Dendritic cell treated with granulocyte-macrophage colony-stimulating factor and Interleukin-4, amounts not matched to agents 40 ng/mL and 50 ng/mL, for 4 days (primary cell): ENCODE measurements at regions of chr7 and their contacts with region 1.

Region 1: DNA sequence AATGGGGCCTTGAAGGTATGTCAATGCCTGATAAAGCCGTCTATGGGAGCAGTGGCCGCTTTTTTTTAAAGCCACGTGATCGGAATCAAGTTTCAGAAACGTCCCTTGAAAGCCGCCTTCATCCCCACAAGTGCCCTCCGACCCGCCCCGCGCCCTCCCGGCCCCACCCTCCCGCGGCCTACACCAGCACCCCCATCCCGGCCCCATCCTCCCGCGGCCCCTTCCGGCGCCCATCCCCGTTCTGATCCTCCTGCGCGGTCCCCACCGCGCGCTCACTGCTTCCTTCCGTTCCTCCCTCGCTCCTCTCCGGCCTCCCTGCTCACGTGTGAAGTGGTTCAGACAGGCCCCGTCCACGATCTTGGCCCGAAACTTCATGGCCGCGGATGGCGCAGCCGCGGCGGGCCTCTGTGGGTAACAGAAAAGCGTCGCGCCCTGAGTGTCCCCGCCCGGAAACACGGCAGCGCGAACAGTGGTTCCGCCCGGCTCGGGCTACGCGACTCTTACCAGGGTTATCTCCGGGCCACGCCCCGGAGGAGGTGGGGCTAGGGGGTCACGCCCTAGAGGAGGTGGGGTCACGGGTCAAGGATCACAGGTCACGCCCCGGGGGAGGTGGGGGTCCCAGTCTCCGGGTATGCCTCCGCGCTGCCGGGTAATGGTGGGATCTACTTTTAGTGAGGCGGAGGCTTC is at the start of gene HUS1:
- H3K4me3 Mint-ChIP-seq: peak within 1 kb of the TSS; percentile 83
- H3K27ac Mint-ChIP-seq: peak within 1 kb of the TSS; percentile 95
- H3K4me1 Mint-ChIP-seq: peaks cover 19% of the 10 kb centered on the region
- H3K27me3 Mint-ChIP-seq: no peaks in the 10 kb centered on the region

Region 2: DNA sequence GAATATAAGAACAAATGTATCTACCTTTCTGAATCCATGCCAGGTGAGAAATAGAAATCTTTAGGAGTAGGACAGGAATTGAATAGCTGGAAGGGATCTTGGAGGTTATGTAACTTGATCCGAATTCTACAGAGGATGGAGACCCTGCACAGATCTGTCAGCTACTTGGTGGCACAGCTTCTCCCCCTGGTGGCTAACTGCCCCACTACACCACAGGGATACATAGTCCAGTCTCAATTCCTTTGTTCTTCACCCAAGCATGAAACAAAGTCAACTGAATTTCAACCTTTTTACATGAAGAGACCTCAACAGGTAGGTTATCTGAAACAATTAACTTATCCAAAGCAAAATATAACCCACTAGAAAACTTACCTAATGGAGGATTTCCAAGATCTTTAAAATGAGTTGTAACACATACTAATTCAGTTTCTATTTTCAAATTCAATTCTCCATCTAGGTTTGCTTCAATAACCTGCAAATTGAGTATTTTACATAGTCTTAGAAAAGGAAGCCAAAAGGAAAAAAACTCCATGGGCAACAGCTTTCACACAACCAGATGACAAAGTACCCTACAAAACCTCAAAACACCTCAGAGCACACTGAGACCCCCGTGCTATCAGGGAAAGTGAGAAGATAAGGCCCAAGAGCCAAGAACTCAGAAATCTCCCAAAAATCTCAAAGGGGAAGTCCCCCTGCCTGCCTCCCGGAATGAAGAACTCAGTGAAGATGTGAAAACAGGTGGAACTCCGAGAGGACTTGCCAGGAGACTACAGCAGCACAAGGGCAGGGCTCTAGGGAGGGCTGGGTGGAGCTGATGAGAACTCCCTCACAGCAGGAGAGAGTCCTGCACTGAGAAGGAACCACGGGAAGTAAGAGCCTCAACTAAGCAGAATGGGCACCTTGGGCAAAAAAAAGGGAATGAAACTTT is 10.2 kb before region 1 on chr7:
- intact Hi-C with region 1: loop called (anchors 1 kb)
- H3K4me3 Mint-ChIP-seq: peak overlapping the region; percentile 56
- H3K27ac Mint-ChIP-seq: peak overlapping the region; percentile 88
- H3K4me1 Mint-ChIP-seq: peaks cover 30% of the 10 kb centered on the region
- H3K27me3 Mint-ChIP-seq: no peaks in the 10 kb centered on the region